ENCODE measurements at regions of chr17 and their contacts with region 1.

Region 1: DNA sequence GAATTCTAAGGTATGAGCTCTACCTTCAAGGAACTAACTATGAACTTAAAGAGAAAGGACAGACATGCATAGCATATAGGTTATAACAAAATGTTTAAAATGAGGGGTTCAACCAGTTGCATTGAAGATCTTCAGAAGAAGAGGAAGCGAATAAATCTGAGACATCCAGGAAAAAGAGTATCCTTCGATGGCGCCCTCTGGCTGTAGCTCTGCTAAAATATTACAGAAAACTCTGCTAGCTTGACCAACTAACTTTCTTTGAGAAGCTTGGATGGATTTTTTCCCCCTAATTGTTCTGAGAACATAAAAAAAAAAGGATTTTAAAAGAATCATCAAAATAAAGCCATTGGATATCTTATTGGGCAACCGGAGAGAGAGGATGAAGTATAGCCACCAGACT is 659.9 kb upstream of the SOX9 start:
- DNase-seq: peak; percentile 28
- ATAC-seq: peak; percentile 68; the same call in 1 of the 2 replicates
- H3K4me3 ChIP-seq: no peak overlapping the region
- H3K27ac ChIP-seq: no peak overlapping the region
- H3K4me1 ChIP-seq: no peaks in the 10 kb centered on the region
- H3K27me3 ChIP-seq: no peaks in the 10 kb centered on the region
- CTCF ChIP-seq: peak; percentile 53 to 75 (median 66)
- POLR2A ChIP-seq: no peak
- RAD21 ChIP-seq: peak; percentile 74

Region 2: DNA sequence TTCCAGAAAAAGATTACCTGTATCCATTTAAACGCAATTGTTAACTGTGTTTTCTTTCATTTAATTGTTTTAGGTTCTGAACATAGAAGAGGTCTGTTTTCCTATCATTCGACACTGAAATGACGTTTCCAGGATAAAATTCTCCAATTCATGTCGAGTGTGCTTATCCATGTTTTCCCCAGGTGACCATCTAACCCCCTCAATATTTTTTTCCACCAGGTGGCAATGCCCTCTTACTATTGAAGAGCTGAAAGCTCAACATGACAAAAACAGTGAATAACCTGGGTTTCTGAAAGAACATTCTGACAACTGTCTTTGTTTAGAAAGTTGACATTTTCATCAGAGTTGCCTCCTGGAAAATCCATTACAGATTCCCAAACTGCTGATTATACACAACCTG is 342.9 kb before region 1 on chr17:
- CTCF ChIA-PET with region 1: interaction called, 15 read pairs
- POLR2A ChIA-PET with region 1: no interaction called
- RAD21 ChIA-PET with region 1: no interaction called
- intact Hi-C with region 1: loop called (anchors 1 kb)
- DNase-seq: peak; percentile 29
- ATAC-seq: peak; percentile 46; the same call in 1 of the 2 replicates
- H3K4me3 ChIP-seq: no peak overlapping the region
- H3K27ac ChIP-seq: no peak overlapping the region
- H3K4me1 ChIP-seq: no peaks in the 10 kb centered on the region
- H3K27me3 ChIP-seq: no peaks in the 10 kb centered on the region
- CTCF ChIP-seq: peak; percentile 55 to 77 (median 66); a peak in 5 of 6 replicates
- POLR2A ChIP-seq: no peak
- RAD21 ChIP-seq: peak; percentile 86

Region 3: GRCh38 chr17:71292006-71292405 is 168.9 kb before region 1 on chr17:
- CTCF ChIA-PET with region 1: interaction called, 8 read pairs
- POLR2A ChIA-PET with region 1: no interaction called
- RAD21 ChIA-PET with region 1: no interaction called
- intact Hi-C with region 1: loop called (anchors 10 kb)
- DNase-seq: no peak
- ATAC-seq: no peak
- H3K4me3 ChIP-seq: no peak overlapping the region
- H3K27ac ChIP-seq: no peak overlapping the region
- H3K4me1 ChIP-seq: no peaks in the 10 kb centered on the region
- H3K27me3 ChIP-seq: no peaks in the 10 kb centered on the region
- CTCF ChIP-seq: no peak
- POLR2A ChIP-seq: no peak
- RAD21 ChIP-seq: no peak

Region 4: GRCh38 chr17:71446645-71447437 is 14.1 kb before region 1 on chr17:
- CTCF ChIA-PET with region 1: interaction called, 16 read pairs
- POLR2A ChIA-PET with region 1: no interaction called
- RAD21 ChIA-PET with region 1: no interaction called
- intact Hi-C with region 1: no loop called
- DNase-seq: no peak
- ATAC-seq: no peak
- H3K4me3 ChIP-seq: no peak overlapping the region
- H3K27ac ChIP-seq: no peak overlapping the region
- H3K4me1 ChIP-seq: no peaks in the 10 kb centered on the region
- H3K27me3 ChIP-seq: no peaks in the 10 kb centered on the region
- CTCF ChIP-seq: no peak
- POLR2A ChIP-seq: no peak
- RAD21 ChIP-seq: no peak